ENCODE measurements at regions of chr11 and their contacts with region 1.

Region 1: DNA sequence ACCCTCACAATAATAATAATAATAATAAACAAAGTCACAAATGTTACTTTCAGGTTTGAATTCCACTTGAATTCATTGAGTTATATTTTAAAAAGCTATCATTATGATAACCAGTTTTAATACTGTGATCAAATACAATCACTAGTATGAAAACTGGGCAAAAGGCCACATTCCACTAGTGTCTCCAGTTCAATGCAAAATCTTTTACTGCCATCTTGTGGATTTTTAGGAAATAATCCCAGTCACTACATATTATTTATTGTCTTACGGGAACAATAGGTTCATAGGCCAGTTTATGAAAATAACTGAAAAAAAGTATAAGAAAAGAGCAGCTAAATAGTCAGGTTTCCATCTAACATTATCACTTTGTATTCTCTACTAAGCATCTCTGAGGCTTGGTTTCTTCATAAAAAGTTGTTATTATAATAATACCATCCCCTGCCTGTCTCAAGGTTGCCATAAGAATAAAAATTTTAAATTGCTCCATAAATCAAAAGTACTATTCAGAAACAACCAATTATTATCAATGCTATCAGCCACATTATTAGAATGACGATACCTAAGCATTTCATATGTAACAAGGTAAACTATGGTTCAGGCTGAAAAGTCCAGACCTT is 533.9 kb upstream of the CCDC90B start:
- DNase-seq: peak in 2 of 9 experiments; percentile 17 to 29
- ATAC-seq: no peak
- H3K4me3 ChIP-seq: no peak overlapping the region
- H3K4me3 Mint-ChIP-seq: no peak overlapping the region
- H3K27ac ChIP-seq: no peak overlapping the region
- H3K27ac Mint-ChIP-seq: no peak overlapping the region
- H3K4me1 ChIP-seq: no peaks in the 10 kb centered on the region
- H3K4me1 Mint-ChIP-seq: no peaks in the 10 kb centered on the region
- H3K27me3 ChIP-seq: no peaks in the 10 kb centered on the region
- H3K27me3 Mint-ChIP-seq: peaks cover 3% of the 10 kb centered on the region
- CTCF ChIP-seq: peak; percentile 33

Region 2: GRCh38 chr11:82682003-82682751 is 1137.9 kb before region 1 on chr11:
- CTCF ChIA-PET with region 1: no interaction called
- POLR2A ChIA-PET with region 1: no interaction called
- intact Hi-C with region 1: loop called in 1 of 2 experiments (anchors 2 kb)
- DNase-seq: peak in 2 of 9 experiments; percentile 57 to 63
- ATAC-seq: peak; percentile 46
- H3K4me3 ChIP-seq: no peak overlapping the region
- H3K4me3 Mint-ChIP-seq: no peak overlapping the region
- H3K27ac ChIP-seq: no peak overlapping the region
- H3K27ac Mint-ChIP-seq: no peak overlapping the region
- H3K4me1 ChIP-seq: no peaks in the 10 kb centered on the region
- H3K4me1 Mint-ChIP-seq: peaks cover 4% of the 10 kb centered on the region
- H3K27me3 ChIP-seq: no peaks in the 10 kb centered on the region
- H3K27me3 Mint-ChIP-seq: peaks cover 19% of the 10 kb centered on the region
- CTCF ChIP-seq: peak; percentile 57

Region 3: DNA sequence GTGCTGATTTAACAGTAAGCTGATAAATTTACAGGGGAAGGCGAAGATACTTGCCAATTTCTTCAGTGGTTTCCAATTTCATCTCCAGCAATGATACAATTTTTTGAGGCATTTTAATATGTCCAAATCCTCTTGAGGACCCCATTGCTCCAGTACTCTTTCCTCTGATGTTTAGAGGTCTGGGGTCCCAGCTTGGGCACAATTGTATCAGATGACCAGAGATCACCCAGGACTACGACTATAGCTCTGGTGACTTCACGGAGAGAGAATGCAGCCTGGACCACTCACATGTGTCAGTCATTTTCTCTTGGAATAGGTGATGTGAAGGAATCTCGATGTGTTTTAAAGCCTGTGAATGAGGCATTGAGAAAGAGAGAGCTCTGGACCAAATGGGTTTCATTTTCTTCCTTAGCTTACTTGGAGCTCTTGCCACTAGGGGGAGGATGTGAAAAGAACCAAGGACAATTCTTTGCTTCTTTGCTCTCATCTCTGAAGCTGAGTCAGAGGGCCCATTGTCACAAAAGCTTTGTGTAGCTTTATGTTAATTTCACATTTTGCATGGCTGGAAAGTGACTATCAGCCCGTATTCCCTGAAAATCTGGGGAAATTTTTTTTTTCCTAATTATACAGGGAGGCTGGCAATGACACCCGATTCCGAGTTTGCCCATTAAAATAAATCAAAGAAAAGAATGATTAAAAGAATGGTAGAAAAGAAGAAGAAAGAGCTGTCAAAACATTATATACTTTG is 527.2 kb before region 1 on chr11:
- CTCF ChIA-PET with region 1: no interaction called
- POLR2A ChIA-PET with region 1: no interaction called
- intact Hi-C with region 1: loop called in 1 of 2 experiments (anchors 10 kb)
- DNase-seq: peak in 4 of 9 experiments; percentile 12 to 68 (median 30)
- ATAC-seq: peak; percentile 85
- H3K4me3 ChIP-seq: no peak overlapping the region
- H3K4me3 Mint-ChIP-seq: peak overlapping the region; percentile 70
- H3K27ac ChIP-seq: no peak overlapping the region
- H3K27ac Mint-ChIP-seq: peak overlapping the region; percentile 63
- H3K4me1 ChIP-seq: no peaks in the 10 kb centered on the region
- H3K4me1 Mint-ChIP-seq: peaks cover 6% of the 10 kb centered on the region
- H3K27me3 ChIP-seq: no peaks in the 10 kb centered on the region
- H3K27me3 Mint-ChIP-seq: peaks cover 3% of the 10 kb centered on the region
- CTCF ChIP-seq: peak; percentile 63

Region 4: DNA sequence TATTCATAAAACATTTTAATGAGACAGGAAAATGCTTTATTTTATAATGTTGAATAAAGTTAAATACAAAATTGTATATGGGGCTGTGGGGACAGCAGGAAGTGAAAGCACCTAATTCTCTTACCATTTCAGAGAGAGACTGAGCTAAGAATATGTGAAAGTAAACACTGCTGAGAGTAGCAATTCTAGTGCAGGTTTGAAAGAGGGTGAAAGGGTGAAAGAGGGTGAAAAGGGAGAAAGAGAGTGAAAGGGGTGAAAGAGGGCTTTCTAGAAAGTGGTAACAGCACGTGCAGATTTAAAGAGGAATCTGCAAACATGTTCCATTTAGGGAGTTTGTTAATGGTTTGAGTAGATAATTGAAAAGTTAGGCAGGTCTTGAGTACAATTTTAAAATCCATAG is 118.1 kb after region 1 on chr11:
- CTCF ChIA-PET with region 1: no interaction called
- POLR2A ChIA-PET with region 1: no interaction called
- intact Hi-C with region 1: no loop called
- DNase-seq: no peak
- ATAC-seq: no peak
- H3K4me3 ChIP-seq: no peak overlapping the region
- H3K4me3 Mint-ChIP-seq: no peak overlapping the region
- H3K27ac ChIP-seq: no peak overlapping the region
- H3K27ac Mint-ChIP-seq: no peak overlapping the region
- H3K4me1 ChIP-seq: no peaks in the 10 kb centered on the region
- H3K4me1 Mint-ChIP-seq: no peaks in the 10 kb centered on the region
- H3K27me3 ChIP-seq: no peaks in the 10 kb centered on the region
- H3K27me3 Mint-ChIP-seq: no peaks in the 10 kb centered on the region
- CTCF ChIP-seq: no peak

Region 5: DNA sequence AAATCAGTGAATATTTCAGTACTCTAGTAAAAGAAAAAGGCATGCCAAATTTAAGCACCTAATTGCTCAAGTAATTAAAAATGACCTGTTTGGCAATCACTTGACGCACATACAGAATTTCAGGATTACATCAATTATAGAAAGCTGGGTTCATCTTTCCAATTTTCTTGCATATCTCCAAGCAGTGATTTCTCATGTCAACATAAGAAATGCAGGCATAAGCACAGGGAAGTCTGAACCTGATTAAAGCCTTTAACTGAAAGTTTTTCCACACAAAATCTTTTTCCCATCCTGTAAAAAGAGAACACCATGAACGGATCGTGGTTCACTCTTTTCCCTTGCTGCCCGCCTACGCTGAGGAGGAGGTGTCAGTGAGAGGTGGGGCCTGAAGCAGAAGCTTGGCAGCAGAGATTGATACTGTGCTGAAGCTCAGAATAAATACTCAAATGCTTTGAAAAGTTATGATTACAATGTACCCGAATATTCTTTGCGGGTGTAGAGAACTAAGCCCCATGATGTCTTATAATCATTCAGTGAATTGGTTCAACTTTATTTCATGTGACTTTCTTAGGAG is 170.2 kb after region 1 on chr11:
- CTCF ChIA-PET with region 1: no interaction called
- POLR2A ChIA-PET with region 1: no interaction called
- intact Hi-C with region 1: no loop called
- DNase-seq: no peak
- ATAC-seq: no peak
- H3K4me3 ChIP-seq: no peak overlapping the region
- H3K4me3 Mint-ChIP-seq: no peak overlapping the region
- H3K27ac ChIP-seq: no peak overlapping the region
- H3K27ac Mint-ChIP-seq: no peak overlapping the region
- H3K4me1 ChIP-seq: no peaks in the 10 kb centered on the region
- H3K4me1 Mint-ChIP-seq: no peaks in the 10 kb centered on the region
- H3K27me3 ChIP-seq: no peaks in the 10 kb centered on the region
- H3K27me3 Mint-ChIP-seq: no peaks in the 10 kb centered on the region
- CTCF ChIP-seq: no peak